GM18951 (cell line): ENCODE measurements at regions of chr17 and their contacts with region 1.

Region 1: DNA sequence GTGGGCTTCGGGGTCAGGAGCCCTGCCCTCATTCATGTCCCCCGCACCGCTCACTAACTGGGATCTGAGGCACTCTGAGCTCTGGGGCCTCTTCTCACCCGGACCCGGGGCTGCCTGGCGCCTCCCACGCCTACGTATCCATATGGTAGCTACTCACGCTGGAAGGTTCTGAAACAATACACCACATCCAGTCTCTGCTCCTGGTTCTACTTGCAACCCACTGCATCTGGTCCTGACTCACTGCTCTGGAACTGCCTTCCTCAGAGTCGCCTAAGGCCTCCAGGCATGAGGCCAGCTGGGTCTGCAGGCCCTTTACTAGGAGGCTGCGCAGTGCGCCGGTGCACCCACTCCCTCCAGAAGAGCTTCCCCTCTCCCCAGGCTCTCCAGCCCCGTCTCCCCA is 18.1 kb downstream of the USP36 start:
- POLR2A ChIP-seq: no peak

Region 2: GRCh38 chr17:78501241-78502036 is 321.1 kb before region 1 on chr17:
- in situ Hi-C with region 1: loop called (anchors 25 kb)
- POLR2A ChIP-seq: no peak

Region 3: DNA sequence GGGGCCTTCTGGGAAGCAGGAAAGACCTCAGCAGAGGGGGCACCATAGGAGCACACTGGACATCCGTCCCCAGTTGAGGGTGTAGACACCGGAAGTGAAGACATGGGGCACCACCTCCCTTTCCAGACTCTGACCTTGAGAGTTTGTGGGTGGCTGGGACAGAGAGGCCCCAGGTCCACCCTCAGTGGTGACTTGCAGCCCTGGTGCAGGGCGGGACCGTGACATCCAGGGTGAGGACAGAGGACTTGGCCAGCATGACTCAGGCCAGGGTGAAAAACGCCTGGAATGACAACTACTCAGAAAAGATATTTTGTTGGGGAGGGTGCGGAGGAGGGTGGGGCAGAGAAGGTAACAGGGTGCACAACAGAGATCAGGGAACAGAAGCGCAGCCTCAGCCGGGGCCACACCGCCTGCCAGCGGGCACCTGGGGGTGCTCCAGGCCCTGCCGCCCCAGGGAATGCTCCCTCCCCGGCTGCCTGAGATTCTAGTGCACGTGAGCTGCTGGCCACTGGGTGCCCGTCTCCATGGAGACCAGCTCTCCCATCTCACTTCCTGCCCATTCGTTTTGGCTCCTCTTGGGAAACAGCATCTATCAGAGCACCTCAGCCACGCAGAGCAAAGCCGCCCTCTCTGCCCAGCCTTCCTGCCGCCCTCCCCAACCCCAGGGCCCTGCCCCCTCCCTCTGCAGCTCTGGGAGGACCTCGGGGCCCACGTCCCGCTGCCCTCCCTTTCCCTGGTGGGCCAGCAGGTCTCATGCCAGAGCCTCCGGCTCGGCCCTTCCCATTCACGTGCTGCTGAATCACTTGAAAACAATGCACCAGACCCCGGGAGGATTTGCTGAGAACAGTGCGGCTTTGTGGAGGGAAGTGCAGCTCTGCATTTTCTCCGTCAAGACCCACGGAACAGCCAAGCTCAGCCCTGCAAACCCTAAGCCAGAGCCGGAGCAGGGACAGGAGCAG is 60.9 kb after region 1 on chr17:
- in situ Hi-C with region 1: no loop called
- POLR2A ChIP-seq: no peak

Region 4: GRCh38 chr17:79126139-79126538 is 303.6 kb after region 1 on chr17:
- in situ Hi-C with region 1: no loop called
- POLR2A ChIP-seq: no peak